PC-9 (cell line): ENCODE measurements at regions of chr5 and their contacts with region 1.

Region 1: GRCh38 chr5:173412566-173412965 is 84.4 kb upstream of the STC2 start:
- DNase-seq: no peak
- H3K4me3 ChIP-seq: no peak overlapping the region
- H3K27ac ChIP-seq: no peak overlapping the region
- H3K4me1 ChIP-seq: peaks cover 9% of the 10 kb centered on the region
- H3K27me3 ChIP-seq: no peaks in the 10 kb centered on the region
- CTCF ChIP-seq: no peak

Region 2: GRCh38 chr5:173371400-173371799 is 41.2 kb before region 1 on chr5:
- CTCF ChIA-PET with region 1: no interaction called
- POLR2A ChIA-PET with region 1: no interaction called
- intact Hi-C with region 1: loop called (anchors 1 kb)
- DNase-seq: no peak
- H3K4me3 ChIP-seq: no peak overlapping the region
- H3K27ac ChIP-seq: no peak overlapping the region
- H3K4me1 ChIP-seq: no peaks in the 10 kb centered on the region
- H3K27me3 ChIP-seq: no peaks in the 10 kb centered on the region
- CTCF ChIP-seq: no peak

Region 3: DNA sequence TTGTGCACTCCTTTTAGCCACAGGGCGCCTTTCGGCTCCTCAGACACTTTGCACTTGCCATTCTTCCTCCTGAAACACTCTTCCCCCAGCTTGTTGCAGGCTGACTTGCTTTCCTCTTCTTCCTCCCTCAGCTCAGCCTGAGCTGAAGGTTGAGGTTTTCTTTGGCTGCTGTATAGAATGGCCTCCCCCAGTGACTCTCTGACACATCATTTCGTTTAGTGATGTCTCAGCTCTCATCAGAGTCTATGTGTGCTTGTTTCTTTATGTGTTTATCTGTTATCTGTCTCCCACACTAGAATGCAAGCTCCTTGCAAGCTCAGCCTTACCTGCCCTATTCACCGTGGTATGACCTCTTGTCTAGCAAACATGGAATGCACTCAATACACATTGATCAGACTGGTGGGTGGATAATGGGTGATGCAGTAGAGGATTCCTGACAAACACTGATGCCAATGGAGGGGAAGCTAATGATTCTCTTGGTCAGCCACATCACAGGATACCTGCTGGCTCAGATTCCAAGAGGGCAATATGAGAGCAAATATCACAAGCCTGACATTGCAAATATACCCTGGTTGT is 28.6 kb after region 1 on chr5:
- CTCF ChIA-PET with region 1: no interaction called
- POLR2A ChIA-PET with region 1: no interaction called
- intact Hi-C with region 1: no loop called
- DNase-seq: no peak
- H3K4me3 ChIP-seq: no peak overlapping the region
- H3K27ac ChIP-seq: no peak overlapping the region
- H3K4me1 ChIP-seq: no peaks in the 10 kb centered on the region
- H3K27me3 ChIP-seq: no peaks in the 10 kb centered on the region
- CTCF ChIP-seq: no peak